ENCODE measurements at regions of chr7 and their contacts with region 1.

Region 1: DNA sequence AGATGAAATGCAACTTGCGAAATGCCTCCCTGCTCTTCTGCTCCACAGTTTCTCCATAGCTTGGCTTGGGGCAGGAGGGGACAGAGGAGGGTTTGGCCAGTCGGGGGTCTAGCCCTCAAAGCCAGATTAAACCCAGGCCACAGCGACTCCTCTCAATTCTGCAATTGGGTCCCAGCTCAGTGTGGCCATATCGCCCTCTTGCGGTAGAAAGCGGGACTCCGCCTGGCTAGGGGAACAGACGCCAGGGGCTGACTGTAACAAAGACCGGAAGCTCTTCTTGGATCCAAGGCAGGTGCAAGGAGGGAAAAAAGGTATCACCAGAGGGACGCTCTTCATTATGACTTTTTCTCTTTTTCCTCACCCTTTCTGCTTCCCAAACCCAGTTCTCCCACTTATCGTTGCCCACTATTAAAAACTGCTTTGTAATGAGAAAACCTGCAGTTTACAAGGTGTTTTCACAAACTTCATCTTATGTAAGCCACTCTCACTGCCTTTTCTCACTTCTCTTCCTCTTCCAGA is 36.6 kb upstream of the TNPO3 start:
- DNase-seq: peak; percentile 90 to 92 (median 91)
- ATAC-seq: peak; percentile 99
- H3K4me3 ChIP-seq: no peak overlapping the region
- H3K27ac ChIP-seq: no peak overlapping the region
- H3K4me1 ChIP-seq: peaks cover 0 to 2% of the 10 kb centered on the region in 2 experiments; a peak in 2 of 5 replicates
- H3K27me3 ChIP-seq: peaks cover 10 to 11% of the 10 kb centered on the region in 2 experiments; a peak in 4 of 5 replicates
- CTCF ChIP-seq: peak; percentile 99 to 100 (median 99)
- EP300 ChIP-seq: no peak
- POLR2A ChIP-seq: no peak
- RAD21 ChIP-seq: peak; percentile 97 to 99

Region 2: GRCh38 chr7:128919881-128920799 is 171.4 kb before region 1 on chr7:
- CTCF ChIA-PET with region 1: interaction called, 7 read pairs
- POLR2A ChIA-PET with region 1: no interaction called
- in situ Hi-C with region 1: no loop called
- intact Hi-C with region 1: loop called (anchors 1 kb)
- DNase-seq: peak in 1 of 4 experiments; percentile 36
- ATAC-seq: peak; percentile 54
- H3K4me3 ChIP-seq: no peak overlapping the region
- H3K27ac ChIP-seq: no peak overlapping the region
- H3K4me1 ChIP-seq: peaks cover 0 to 10% of the 10 kb centered on the region in 2 experiments; a peak in 2 of 5 replicates
- H3K27me3 ChIP-seq: peaks cover 75 to 82% of the 10 kb centered on the region in 2 experiments
- CTCF ChIP-seq: peak; percentile 33 to 50 (median 35); a peak in 3 of 6 replicates
- EP300 ChIP-seq: no peak
- POLR2A ChIP-seq: no peak
- RAD21 ChIP-seq: peak in 1 of 2 experiments; percentile 53; a peak in 2 of 4 replicates

Region 3: DNA sequence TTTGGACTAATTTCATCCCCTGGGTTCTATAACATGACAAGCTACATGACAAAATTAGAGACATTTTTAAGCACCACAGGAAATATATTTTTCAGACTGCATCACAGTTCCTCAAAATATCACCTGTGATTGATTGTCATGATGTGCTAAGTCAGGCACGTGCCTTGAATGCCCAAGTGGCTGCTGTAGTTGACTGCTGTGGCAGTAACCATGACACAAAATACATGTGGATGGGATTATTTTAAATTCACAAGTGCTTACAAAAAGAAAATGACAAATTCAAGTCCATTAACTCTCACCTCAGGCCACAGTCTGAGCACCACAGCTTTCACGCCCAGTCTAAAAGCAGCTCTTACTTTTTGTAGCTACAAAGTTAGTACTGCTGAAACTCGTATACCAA is 82.1 kb before region 1 on chr7:
- CTCF ChIA-PET with region 1: interaction called, 3 read pairs
- POLR2A ChIA-PET with region 1: no interaction called
- in situ Hi-C with region 1: no loop called
- intact Hi-C with region 1: loop called (anchors 5 kb)
- DNase-seq: no peak
- ATAC-seq: no peak
- H3K4me3 ChIP-seq: no peak overlapping the region
- H3K27ac ChIP-seq: no peak overlapping the region
- H3K4me1 ChIP-seq: no peaks in the 10 kb centered on the region
- H3K27me3 ChIP-seq: no peaks in the 10 kb centered on the region
- CTCF ChIP-seq: no peak
- EP300 ChIP-seq: no peak
- POLR2A ChIP-seq: no peak
- RAD21 ChIP-seq: no peak

Region 4: DNA sequence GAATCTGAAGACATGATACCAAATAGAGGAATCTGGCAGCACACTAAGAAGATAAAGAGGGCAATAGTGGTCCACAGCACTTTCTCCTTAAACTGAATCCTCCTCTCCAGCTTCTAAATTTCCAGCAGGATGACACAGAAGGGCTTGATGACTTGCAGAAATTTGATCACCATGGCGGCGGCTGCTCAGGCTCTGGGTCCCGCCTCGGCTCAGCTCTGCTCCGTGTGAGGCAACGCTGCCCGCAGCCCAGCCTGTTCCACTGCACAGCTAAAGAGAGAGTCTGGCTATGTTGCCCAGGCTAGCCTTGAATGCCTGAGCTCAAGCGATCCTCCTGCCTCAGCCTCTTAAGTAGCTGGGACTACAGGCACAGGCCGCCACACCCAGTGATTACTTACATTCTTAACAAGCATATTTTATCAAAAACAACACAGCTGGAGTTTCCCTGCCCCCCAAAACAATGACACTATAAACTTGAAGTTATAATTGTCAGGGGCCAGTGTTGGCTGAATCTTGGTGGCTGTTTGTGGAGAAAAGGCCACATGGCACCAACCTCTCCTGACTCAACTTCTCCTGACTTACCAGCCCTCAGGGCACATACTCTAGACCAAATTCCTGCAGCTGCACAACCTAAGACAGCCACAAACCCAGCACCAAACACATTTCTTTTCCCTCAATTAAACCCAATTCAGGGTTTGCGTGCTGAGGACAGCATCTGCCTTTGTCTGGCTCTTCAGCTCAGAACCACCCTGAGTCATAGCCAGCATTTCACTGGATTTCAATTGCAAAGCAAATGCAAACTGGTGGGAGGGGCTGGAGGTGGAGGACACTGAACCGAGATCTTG is 25.0 kb before region 1 on chr7:
- CTCF ChIA-PET with region 1: interaction called, 9 read pairs
- POLR2A ChIA-PET with region 1: interaction called, 3 read pairs
- in situ Hi-C with region 1: no loop called
- intact Hi-C with region 1: loop called (anchors 2 kb)
- DNase-seq: peak; percentile 80 to 91 (median 83)
- ATAC-seq: peak; percentile 92
- H3K4me3 ChIP-seq: peak overlapping the region; percentile 6; the same call in 1 of the 2 replicates
- H3K27ac ChIP-seq: peak overlapping the region; percentile 97
- H3K4me1 ChIP-seq: peaks cover 18 to 32% of the 10 kb centered on the region in 2 experiments
- H3K27me3 ChIP-seq: no peaks in the 10 kb centered on the region; a peak in 1 of 5 replicates
- CTCF ChIP-seq: no peak; a peak in 1 of 6 replicates
- EP300 ChIP-seq: peak; percentile 79
- POLR2A ChIP-seq: peak; percentile 72
- RAD21 ChIP-seq: peak; percentile 10 to 26; a peak in 2 of 4 replicates

Region 5: DNA sequence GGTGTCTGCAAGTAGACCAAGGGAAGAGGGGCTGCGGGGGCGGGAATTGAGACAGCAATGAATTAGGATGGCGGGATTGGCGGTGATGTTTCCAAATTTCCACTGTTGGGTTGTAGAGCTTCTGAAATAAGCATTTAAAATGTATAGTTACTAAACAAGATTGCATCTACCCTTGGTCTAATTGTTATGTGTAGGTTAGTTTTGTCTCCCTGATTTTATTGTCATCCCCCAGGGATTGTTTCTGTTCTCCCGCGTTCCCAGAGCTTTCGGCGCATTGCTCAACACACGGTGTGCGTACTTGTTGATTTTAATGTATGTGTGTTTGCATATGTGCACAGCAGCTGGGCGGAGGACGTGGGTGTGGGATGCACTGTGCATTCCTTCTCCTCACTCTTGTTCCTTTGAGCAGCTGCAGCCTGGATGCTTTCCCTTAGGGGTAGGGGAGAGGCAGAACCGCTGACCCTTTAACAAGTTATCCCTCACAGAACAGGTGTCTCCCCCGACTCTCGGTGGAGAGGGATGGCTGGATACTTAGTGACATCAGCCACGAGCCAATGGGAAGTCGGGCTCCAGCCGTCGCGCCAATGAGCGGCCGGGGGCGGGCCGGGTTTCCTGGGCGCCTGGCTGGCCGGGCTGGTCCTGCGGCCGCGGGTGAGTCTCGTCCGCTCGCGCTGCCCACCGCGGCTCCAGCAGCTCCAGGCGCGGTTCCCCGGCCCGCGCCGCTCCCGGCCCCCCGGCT is 52.7 kb after region 1 on chr7 and contains the start of gene TSPAN33:
- CTCF ChIA-PET with region 1: no interaction called
- POLR2A ChIA-PET with region 1: no interaction called
- in situ Hi-C with region 1: no loop called
- intact Hi-C with region 1: no loop called
- DNase-seq: peak; percentile 55 to 93 (median 90)
- ATAC-seq: peak; percentile 91
- H3K4me3 ChIP-seq: peak within 1 kb of the TSS; percentile 11; the same call in 1 of the 2 replicates
- H3K27ac ChIP-seq: no peak within 1 kb of the TSS
- H3K4me1 ChIP-seq: peaks cover 0 to 12% of the 10 kb centered on the region in 2 experiments; a peak in 3 of 5 replicates
- H3K27me3 ChIP-seq: peaks cover 61 to 72% of the 10 kb centered on the region in 2 experiments
- CTCF ChIP-seq: no peak
- EP300 ChIP-seq: no peak
- POLR2A ChIP-seq: no peak
- RAD21 ChIP-seq: no peak
- polyA plus RNA-seq, gene TSPAN33: 0.03 TPM in 1 of 2 experiments, not detected in the other

Measured in K562 (cell line).